B cell (primary cell): ENCODE measurements at regions of chr5 and their contacts with region 1.

Region 1: DNA sequence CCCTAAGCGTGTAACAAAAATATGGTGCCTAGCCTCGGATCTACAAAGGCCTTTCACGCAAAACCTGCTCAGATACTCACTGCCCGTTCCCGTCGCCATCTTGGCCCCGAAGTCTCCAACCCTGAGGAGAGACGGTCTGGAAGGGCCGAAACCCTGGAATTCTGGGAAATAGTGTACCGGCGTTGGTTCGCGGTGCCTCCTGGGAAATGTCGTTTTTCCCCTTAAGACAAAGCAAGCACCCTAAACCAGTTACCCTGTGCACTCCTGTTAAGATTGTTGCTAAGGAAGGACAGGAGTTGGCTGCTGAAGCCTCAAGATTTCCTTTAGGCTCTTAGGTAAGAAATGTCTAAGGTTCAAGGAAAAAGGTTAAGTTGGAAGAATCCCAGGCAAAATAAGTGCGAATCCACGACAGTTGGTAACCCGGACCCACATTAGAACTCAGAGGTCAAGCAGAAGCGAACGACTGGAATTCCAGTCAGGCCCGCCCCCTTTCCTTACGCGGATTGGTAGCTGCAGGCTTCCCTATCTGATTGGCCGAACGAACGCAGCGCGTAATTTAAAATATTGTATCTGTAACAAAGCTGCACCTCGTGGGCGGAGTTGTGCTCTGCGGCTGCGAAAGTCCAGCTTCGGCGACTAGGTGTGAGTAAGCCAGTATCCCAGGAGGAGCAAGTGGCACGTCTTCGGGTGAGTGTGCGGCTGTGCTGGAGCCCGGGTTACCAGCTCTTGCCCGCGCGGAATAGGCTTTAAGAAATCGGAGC is at the starts of genes BRD8 and KIF20A:
- DNase-seq: peak; percentile 93
- ATAC-seq: peak; percentile 93
- H3K4me3 ChIP-seq: peak within 1 kb of the TSS; percentile 73 to 99 (median 87)
- H3K4me3 Mint-ChIP-seq: peak within 1 kb of the TSS; percentile 76
- H3K27ac ChIP-seq: peak within 1 kb of the TSS; percentile 37 to 76
- H3K27ac Mint-ChIP-seq: peak within 1 kb of the TSS; percentile 32
- H3K4me1 ChIP-seq: peaks cover 11 to 18% of the 10 kb centered on the region in 2 donors
- H3K4me1 Mint-ChIP-seq: peaks cover 9% of the 10 kb centered on the region
- H3K27me3 ChIP-seq: no peaks in the 10 kb centered on the region
- H3K27me3 Mint-ChIP-seq: no peaks in the 10 kb centered on the region
- CTCF ChIP-seq: no peak
- total RNA-seq, gene BRD8: 98.9 and 114 TPM in 2 replicates
- total RNA-seq, gene KIF20A: 0.47 TPM in 1 of 2 replicates, not detected in the other

Region 2: DNA sequence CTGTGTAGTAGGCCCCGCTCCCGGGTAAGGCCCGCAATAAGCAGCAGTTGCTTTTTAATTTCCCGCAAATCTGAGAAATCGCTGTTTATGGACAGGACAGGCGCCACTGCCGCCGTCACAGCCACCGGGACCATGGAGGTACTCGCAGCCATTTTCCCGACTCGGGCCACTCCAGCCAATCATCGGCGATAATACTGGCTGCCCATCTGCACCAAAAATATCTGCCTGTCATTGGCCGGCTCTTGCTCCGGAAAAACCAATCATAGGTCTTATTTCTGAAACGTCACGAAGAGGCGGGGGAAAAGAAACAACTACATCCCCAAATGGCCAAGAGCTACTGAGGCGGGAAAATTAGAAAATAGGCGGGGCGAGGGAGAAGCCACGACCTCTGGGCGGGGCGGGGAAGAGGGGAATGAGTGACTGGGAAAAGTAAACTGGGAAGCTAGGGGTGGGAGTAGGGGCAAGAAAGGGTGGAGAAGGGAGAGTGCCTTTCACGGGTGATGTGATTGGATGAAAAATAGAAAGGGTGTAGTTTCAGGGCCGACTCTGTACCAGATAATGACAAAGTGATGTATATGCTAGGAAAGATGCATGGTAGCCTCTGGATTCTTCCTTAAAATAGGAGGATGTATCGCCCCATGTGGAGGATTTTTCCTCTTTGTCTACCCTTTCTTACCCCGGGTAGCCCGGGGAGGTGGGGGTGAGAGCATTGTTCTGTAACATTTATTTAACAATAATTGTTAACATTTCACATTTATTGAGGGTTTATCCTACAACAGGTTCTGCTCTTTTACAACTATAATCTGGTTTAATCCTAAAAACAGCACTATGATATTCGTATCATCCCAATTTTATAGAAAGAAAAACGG is 34.7 kb after region 1 on chr5 and contains the start of gene CDC23:
- CTCF ChIA-PET with region 1: no interaction called
- POLR2A ChIA-PET with region 1: no interaction called
- intact Hi-C with region 1: loop called (anchors 1 kb)
- DNase-seq: peak; percentile 95
- ATAC-seq: peak; percentile 97
- H3K4me3 ChIP-seq: peak within 1 kb of the TSS; percentile 77 to 99 (median 93)
- H3K4me3 Mint-ChIP-seq: peak within 1 kb of the TSS; percentile 93
- H3K27ac ChIP-seq: peak within 1 kb of the TSS; percentile 52 to 87
- H3K27ac Mint-ChIP-seq: peak within 1 kb of the TSS; percentile 92
- H3K4me1 ChIP-seq: peaks cover 10 to 20% of the 10 kb centered on the region in 2 donors
- H3K4me1 Mint-ChIP-seq: peaks cover 19% of the 10 kb centered on the region
- H3K27me3 ChIP-seq: no peaks in the 10 kb centered on the region
- H3K27me3 Mint-ChIP-seq: no peaks in the 10 kb centered on the region
- CTCF ChIP-seq: no peak
- total RNA-seq, gene CDC23: 29.7 and 35.4 TPM in 2 replicates

Region 3: GRCh38 chr5:138331449-138332368 is 153.0 kb after region 1 on chr5 and contains the start of gene CDC25C:
- CTCF ChIA-PET with region 1: no interaction called
- POLR2A ChIA-PET with region 1: interaction called, 3 read pairs
- intact Hi-C with region 1: loop called (anchors 1 kb)
- DNase-seq: peak; percentile 97
- ATAC-seq: peak; percentile 100
- H3K4me3 ChIP-seq: peak within 1 kb of the TSS; percentile 60 to 75 (median 72)
- H3K4me3 Mint-ChIP-seq: peak within 1 kb of the TSS; percentile 87
- H3K27ac ChIP-seq: peak within 1 kb of the TSS in 1 of 2 donors; percentile 23
- H3K27ac Mint-ChIP-seq: peak within 1 kb of the TSS; percentile 61
- H3K4me1 ChIP-seq: peaks cover 7 to 15% of the 10 kb centered on the region in 2 donors
- H3K4me1 Mint-ChIP-seq: peaks cover 14% of the 10 kb centered on the region
- H3K27me3 ChIP-seq: no peaks in the 10 kb centered on the region
- H3K27me3 Mint-ChIP-seq: no peaks in the 10 kb centered on the region
- CTCF ChIP-seq: no peak
- total RNA-seq, gene CDC25C: not detected in 2 replicates

Region 4: DNA sequence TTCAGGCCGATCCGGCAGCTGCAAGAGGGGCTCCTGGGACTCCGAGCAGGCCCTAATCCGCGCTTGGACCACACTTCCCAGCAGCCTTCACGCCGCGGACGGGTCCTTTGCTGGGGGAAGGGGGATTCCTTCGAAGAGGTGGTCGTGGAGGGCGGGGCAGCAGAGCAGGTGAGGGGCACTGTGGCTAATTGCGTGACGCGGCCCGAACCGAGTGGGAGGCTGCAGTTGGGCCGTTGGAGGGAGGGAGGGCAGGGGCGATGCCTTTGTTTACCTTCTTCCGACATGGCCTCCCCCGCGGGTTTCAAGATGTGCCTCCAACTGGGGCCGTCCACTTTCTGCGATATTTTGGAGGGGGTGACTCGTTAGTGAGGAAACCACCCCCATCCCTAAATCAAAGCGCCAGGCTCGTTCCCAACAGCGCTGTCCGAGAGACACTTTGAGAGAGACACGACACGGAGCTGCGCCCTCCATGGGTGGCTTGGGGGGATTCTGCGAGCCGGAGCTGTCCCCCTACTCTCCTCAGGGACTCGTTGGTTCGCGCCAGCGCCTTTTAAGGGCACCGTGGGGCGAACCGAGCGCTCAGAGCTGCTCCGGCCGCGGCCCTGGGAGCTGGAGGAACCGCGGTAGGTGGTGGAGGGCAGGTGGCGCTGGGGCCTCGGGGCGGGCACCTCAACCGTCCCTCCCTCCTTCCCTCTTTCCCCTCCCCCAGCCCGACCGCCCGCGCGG is 159.2 kb after region 1 on chr5 and contains the start of gene FAM53C:
- CTCF ChIA-PET with region 1: interaction called, 3 read pairs
- POLR2A ChIA-PET with region 1: interaction called, 4 read pairs
- intact Hi-C with region 1: loop called (anchors 1 kb)
- DNase-seq: peak; percentile 99
- ATAC-seq: peak; percentile 82
- H3K4me3 ChIP-seq: peak within 1 kb of the TSS; percentile 55 to 90 (median 67)
- H3K4me3 Mint-ChIP-seq: peak within 1 kb of the TSS; percentile 92
- H3K27ac ChIP-seq: peak within 1 kb of the TSS; percentile 96 to 99
- H3K27ac Mint-ChIP-seq: peak within 1 kb of the TSS; percentile 100
- H3K4me1 ChIP-seq: peaks cover 22 to 25% of the 10 kb centered on the region in 2 donors
- H3K4me1 Mint-ChIP-seq: peaks cover 35% of the 10 kb centered on the region
- H3K27me3 ChIP-seq: no peaks in the 10 kb centered on the region
- H3K27me3 Mint-ChIP-seq: no peaks in the 10 kb centered on the region
- CTCF ChIP-seq: no peak
- total RNA-seq, gene FAM53C: 29.3 and 29.8 TPM in 2 replicates

Region 5: DNA sequence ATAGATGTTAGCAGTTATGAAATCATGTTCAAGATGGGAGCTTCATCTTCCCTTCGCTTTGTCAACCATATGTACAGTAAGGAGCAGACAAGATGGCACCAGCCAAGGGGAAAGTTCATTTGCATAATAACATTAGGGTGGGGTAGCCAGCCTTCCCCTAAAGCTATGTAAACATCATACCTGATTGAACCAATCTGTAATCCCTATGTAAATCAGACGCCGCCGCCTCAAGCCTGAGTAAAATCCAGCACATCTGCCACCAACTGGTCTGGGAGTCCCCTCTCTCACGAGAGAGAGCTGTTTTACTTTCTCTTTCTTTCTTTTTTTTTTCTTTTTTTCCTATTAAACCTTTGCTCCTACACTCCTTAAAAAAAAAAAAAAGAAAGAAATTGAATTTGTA is 229.3 kb after region 1 on chr5:
- CTCF ChIA-PET with region 1: interaction called, 3 read pairs
- POLR2A ChIA-PET with region 1: no interaction called
- intact Hi-C with region 1: loop called (anchors 1 kb)
- DNase-seq: peak; percentile 62
- ATAC-seq: peak; percentile 58
- H3K4me3 ChIP-seq: no peak overlapping the region
- H3K4me3 Mint-ChIP-seq: peak overlapping the region; percentile 24
- H3K27ac ChIP-seq: peak overlapping the region; percentile 7 to 74
- H3K27ac Mint-ChIP-seq: peak overlapping the region; percentile 51
- H3K4me1 ChIP-seq: peaks cover 5 to 8% of the 10 kb centered on the region in 2 donors
- H3K4me1 Mint-ChIP-seq: peaks cover 15% of the 10 kb centered on the region
- H3K27me3 ChIP-seq: no peaks in the 10 kb centered on the region
- H3K27me3 Mint-ChIP-seq: no peaks in the 10 kb centered on the region
- CTCF ChIP-seq: no peak

Region 6: GRCh38 chr5:138503487-138504270 is 325.0 kb after region 1 on chr5:
- CTCF ChIA-PET with region 1: interaction called, 11 read pairs
- POLR2A ChIA-PET with region 1: no interaction called
- intact Hi-C with region 1: no loop called
- DNase-seq: peak; percentile 73
- ATAC-seq: peak; percentile 78
- H3K4me3 ChIP-seq: no peak overlapping the region
- H3K4me3 Mint-ChIP-seq: no peak overlapping the region
- H3K27ac ChIP-seq: no peak overlapping the region
- H3K27ac Mint-ChIP-seq: no peak overlapping the region
- H3K4me1 ChIP-seq: no peaks in the 10 kb centered on the region
- H3K4me1 Mint-ChIP-seq: no peaks in the 10 kb centered on the region
- H3K27me3 ChIP-seq: no peaks in the 10 kb centered on the region
- H3K27me3 Mint-ChIP-seq: no peaks in the 10 kb centered on the region
- CTCF ChIP-seq: peak; percentile 74

Region 7: DNA sequence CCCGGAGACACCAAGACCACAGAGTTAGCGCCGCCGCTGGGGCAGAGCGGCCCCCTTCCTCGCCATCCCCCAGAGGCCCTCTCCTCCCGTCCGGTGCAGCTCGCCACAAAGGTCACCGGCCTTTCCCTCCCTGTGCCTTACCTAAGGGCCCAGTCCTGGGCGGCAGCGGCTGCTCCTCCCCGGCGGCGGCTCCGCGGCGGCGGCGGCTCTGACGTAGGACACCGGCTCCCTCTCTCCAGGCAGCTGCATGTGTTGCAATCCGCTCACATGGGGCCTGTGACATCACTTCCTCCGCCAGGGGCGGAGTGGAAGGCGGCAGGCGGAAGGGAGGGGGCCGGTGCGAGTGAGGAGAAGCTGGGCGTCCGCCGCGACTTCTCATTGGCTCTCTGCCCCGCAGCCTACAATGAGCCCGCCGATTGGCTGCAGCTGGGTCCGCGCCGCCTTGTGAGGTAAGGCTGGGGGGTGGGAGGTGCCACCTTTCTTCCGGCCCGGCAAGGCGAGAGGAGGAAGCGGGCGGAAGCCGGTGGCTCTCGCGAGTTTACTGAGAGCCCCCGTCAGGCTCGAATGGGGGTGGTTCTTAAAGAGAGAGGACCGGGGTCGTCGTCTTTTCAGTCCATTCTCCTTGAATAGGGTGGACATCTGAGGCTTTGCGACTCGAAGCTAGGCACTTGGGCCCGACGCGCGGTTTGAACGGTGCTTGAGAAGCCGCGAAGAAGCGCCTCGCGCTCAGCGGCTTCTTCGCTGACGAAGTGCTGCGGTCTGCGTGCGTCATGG is 364.4 kb after region 1 on chr5 and contains the start of gene ETF1:
- CTCF ChIA-PET with region 1: no interaction called
- POLR2A ChIA-PET with region 1: interaction called, 4 read pairs
- intact Hi-C with region 1: loop called (anchors 1 kb)
- DNase-seq: peak; percentile 100
- ATAC-seq: peak; percentile 91
- H3K4me3 ChIP-seq: peak within 1 kb of the TSS; percentile 92 to 99 (median 95)
- H3K4me3 Mint-ChIP-seq: peak within 1 kb of the TSS; percentile 94
- H3K27ac ChIP-seq: peak within 1 kb of the TSS; percentile 100
- H3K27ac Mint-ChIP-seq: peak within 1 kb of the TSS; percentile 100
- H3K4me1 ChIP-seq: peaks cover 33 to 46% of the 10 kb centered on the region in 2 donors
- H3K4me1 Mint-ChIP-seq: peaks cover 74% of the 10 kb centered on the region
- H3K27me3 ChIP-seq: no peaks in the 10 kb centered on the region
- H3K27me3 Mint-ChIP-seq: no peaks in the 10 kb centered on the region
- CTCF ChIP-seq: no peak
- total RNA-seq, gene ETF1: 50.5 and 50.8 TPM in 2 replicates